Psoas muscle (tissue), 8 donors: ENCODE measurements at regions of chr5 and their contacts with region 1.

Region 1: DNA sequence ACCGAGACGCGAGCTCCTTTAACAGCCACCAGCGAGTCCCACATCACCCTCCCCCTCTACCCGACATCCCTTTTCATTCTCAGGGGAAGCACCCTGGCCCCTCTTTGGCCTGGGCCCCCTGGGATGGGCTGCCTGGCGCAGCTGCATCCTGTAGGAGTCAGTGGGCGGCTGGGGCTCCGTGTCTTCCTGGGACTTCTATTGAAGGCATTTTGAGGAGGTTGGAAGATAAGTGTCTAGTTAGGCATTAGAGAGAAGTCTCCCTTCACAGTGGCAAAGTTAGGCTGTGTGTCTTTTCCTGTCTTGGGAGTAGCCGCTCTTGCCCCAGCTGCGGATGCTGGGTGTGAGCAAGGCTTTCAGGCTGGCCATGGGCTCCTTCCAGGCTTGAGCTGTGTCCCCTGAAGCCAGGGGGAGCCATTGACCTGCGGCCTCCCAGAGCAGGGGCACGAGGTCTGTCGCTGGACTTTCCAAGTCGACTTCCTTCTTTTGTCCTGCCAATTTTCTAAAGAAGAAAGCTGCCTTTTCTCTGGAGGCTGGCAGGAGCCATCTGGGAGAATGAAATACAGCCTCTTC is 18.6 kb upstream of the NKD2 start:
- DNase-seq: peak; percentile 73 to 85
- ATAC-seq: peak; percentile 49 to 78 (median 63)
- H3K4me3 ChIP-seq: no peak overlapping the region
- H3K27ac ChIP-seq: no peak overlapping the region
- H3K4me1 ChIP-seq: peaks cover 7% of the 10 kb centered on the region
- H3K27me3 ChIP-seq: peaks cover 0 to 10% (median 0%) of the 10 kb centered on the region in 3 donors
- CTCF ChIP-seq: peak; percentile 47

Region 2: GRCh38 chr5:1134478-1134877 is 144.4 kb after region 1 on chr5:
- intact Hi-C with region 1: loop called in 1 of 2 experiments (anchors 10 kb)
- DNase-seq: no peak
- ATAC-seq: no peak
- H3K4me3 ChIP-seq: no peak overlapping the region
- H3K27ac ChIP-seq: no peak overlapping the region
- H3K4me1 ChIP-seq: peaks cover 4% of the 10 kb centered on the region
- H3K27me3 ChIP-seq: peaks cover 0 to 8% (median 5%) of the 10 kb centered on the region in 3 donors
- CTCF ChIP-seq: no peak